ENCODE measurements at regions of chr6 and their contacts with region 1.

Region 1: GRCh38 chr6:127539272-127539671 is 20.1 kb upstream of the MTCL3 start:
- DNase-seq: no peak
- H3K4me3 ChIP-seq: no peak overlapping the region
- H3K27ac ChIP-seq: no peak overlapping the region
- H3K27me3 ChIP-seq: peaks cover 0 to 3% (median 0%) of the 10 kb centered on the region in 45 donors
- CTCF ChIP-seq: peak; percentile 25 to 89 (median 61)

Region 2: DNA sequence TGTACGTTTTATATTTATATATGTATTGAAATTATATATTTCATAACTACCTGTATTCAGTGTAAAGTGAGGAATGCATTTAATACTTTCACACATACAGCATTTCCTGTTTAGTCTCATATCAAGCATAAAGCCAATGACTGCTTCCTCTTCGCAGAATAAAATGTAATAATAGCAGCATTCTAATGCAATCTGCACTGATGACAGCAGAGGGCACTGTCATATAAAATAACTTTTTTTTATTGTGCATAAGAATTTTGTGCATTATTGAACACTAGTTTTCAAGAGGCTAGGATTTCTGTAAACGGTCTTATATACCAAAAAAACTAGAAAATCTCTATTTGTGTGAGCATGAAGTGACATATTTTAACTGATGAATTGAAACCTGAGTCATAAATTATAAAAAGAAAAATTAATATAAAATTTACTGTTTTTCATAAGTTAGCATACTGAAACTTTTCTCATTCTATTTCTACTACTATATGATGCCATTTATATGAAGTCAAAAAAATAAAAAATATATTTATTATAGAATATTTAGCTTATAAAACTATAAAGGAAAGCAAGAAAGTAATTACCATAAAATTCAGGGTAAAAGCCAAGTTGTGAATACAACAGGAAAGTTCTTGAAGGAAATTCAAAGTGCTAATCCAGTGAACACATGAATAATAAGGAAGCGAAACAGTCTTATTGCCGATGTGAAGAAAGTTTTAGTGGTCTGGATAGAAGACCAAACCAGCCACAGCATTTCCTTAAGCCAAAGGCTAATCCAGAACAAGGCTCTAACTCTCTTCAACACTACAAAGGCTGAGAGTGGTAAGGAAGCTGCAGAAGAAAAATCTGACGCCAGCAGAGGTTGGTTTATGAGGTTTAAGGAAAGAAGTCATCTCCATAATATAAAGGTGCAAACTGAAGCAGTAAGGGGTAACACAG is 236.3 kb before region 1 on chr6:
- intact Hi-C with region 1: loop called (anchors 5 kb)
- DNase-seq: no peak
- H3K4me3 ChIP-seq: no peak overlapping the region
- H3K27ac ChIP-seq: no peak overlapping the region
- H3K27me3 ChIP-seq: no peaks in the 10 kb centered on the region
- CTCF ChIP-seq: peak; percentile 58 to 88 (median 74)

Region 3: GRCh38 chr6:127464881-127465459 is 74.3 kb before region 1 on chr6:
- intact Hi-C with region 1: loop called (anchors 2 to 5 kb)
- DNase-seq: peak in 9 of 10 donors; percentile 47 to 74 (median 70)
- H3K4me3 ChIP-seq: no peak overlapping the region
- H3K27ac ChIP-seq: peak overlapping the region in 5 of 59 donors; percentile 11 to 62 (median 37)
- H3K27me3 ChIP-seq: no peaks in the 10 kb centered on the region
- CTCF ChIP-seq: peak; percentile 57 to 94 (median 85)